ENCODE measurements at regions of chr1 and their contacts with region 1.

Region 1: DNA sequence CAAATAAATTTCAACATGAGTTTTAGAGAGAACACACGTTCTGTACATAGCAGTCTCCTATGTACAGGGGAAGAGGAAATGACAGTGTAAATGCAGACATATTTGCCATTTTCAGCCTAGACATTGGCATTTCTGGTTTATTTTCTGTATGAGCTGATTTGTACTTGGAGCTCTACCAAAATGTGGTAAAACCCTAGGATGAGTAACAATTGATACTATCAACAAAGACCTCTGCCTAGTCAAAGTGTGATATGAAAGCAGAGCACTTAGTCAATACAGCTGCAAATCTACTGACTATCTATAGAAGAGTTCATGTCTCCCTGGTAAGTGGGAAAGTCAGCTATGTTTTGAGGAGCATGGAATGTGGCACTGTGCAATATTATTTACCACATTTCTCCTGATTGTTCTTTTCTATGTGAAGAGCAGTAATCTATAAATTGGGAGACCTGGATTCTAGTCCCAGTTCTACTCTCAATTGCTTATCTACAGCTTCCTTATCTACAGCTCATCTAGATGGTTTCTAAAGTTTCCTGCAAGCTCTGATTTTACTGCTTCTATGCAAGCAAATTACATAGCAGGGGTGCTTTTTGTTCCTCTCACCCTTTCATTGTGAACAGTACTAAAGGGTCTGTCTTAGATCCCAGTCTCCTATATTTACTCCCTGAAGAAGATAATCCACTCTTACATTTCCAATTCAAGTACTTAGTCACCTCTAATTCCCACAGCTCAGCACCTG is 334.2 kb downstream of the NTNG1 start:
- DNase-seq: no peak
- ATAC-seq: peak; percentile 84
- H3K4me3 ChIP-seq: no peak overlapping the region
- H3K27ac ChIP-seq: no peak overlapping the region
- H3K4me1 ChIP-seq: peaks cover 5% of the 10 kb centered on the region; the same call in 1 of the 2 replicates
- H3K27me3 ChIP-seq: no peaks in the 10 kb centered on the region
- CTCF ChIP-seq: no peak
- EP300 ChIP-seq: no peak
- POLR2A ChIP-seq: no peak
- RAD21 ChIP-seq: no peak

Region 2: DNA sequence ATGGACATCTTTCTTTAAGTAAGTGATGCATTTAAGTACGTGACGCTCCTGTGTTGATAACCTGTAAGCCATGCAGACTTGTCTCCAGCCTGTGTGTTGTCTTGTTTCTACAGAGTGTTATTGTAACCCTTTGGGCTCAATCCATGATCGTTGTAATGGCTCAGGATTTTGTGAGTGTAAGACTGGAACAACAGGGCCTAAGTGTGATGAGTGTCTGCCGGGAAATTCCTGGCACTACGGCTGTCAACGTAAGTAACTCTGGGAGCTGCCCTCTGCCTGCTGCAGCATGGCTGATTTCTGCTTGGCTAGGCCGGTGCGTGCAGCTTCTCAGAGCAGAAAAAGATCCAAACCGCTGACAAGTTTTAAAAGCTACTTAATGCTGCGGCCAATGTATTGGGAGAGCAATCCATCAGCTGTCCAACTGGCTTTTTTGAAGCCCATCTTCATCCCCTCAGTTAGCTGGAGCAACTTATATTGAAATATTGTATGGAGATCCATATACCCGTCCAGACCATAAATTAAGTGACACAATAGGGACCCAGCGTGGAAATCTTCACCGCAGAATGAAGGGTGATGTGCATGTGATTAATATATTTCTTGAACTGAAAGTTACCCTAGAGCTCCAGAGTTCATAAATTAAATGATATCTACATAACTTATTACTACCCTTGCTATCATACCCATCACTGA is 38.3 kb before region 1 on chr1:
- CTCF ChIA-PET with region 1: interaction called, 124 read pairs
- POLR2A ChIA-PET with region 1: interaction called, 3 read pairs
- RAD21 ChIA-PET with region 1: interaction called, 30 read pairs
- SMC1A ChIA-PET with region 1: interaction called, 156 read pairs
- in situ Hi-C with region 1: no loop called
- intact Hi-C with region 1: loop called (anchors 2 kb)
- DNase-seq: no peak
- ATAC-seq: no peak
- H3K4me3 ChIP-seq: no peak overlapping the region
- H3K27ac ChIP-seq: no peak overlapping the region
- H3K4me1 ChIP-seq: peaks cover 6% of the 10 kb centered on the region; the same call in 1 of the 2 replicates
- H3K27me3 ChIP-seq: no peaks in the 10 kb centered on the region
- CTCF ChIP-seq: no peak
- EP300 ChIP-seq: no peak
- POLR2A ChIP-seq: no peak
- RAD21 ChIP-seq: no peak

Region 3: DNA sequence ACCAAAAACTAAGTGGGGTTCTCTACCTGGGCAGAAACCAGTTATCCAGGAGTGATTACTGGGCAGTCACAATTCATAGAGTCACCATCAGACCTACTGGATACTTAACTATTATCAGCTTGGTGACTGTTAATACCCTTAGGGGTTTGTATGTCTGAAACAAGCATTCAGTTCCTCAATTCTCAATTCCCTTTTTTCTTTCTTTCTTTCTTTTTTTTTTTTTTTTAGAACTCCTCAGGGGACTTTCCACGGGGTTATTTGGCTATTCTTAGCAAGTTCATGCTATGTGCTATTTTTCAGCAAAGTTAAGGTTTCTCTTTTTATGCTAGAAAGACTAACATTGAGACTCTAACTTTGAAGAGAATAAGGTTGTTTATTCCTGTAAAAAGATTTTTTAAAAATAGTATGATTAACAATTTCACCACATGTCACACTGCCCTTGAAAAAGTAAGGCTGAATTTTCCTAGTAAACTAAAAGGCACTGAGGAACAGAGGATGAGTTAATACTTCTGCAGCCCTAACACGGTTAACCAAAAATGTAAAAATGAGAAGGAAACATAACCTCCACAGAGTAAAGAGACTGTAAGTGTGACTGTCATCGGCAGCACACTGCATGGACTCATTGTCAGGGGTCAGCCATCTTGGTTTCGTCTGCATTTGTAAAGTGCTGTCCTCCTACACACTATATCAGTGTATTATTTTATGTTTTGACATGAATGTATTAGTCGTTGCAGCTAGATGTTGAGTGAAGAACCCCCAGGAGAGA is 24.0 kb before region 1 on chr1:
- CTCF ChIA-PET with region 1: interaction called, 16 read pairs
- POLR2A ChIA-PET with region 1: interaction called, 3 read pairs
- RAD21 ChIA-PET with region 1: interaction called, 3 read pairs
- SMC1A ChIA-PET with region 1: interaction called, 65 read pairs
- in situ Hi-C with region 1: no loop called
- intact Hi-C with region 1: no loop called
- DNase-seq: peak; percentile 72
- ATAC-seq: peak; percentile 93
- H3K4me3 ChIP-seq: peak overlapping the region; percentile 45; the same call in 1 of the 2 replicates
- H3K27ac ChIP-seq: peak overlapping the region; percentile 96
- H3K4me1 ChIP-seq: peaks cover 29% of the 10 kb centered on the region
- H3K27me3 ChIP-seq: no peaks in the 10 kb centered on the region
- CTCF ChIP-seq: no peak
- EP300 ChIP-seq: peak; percentile 80 to 91; a peak in 3 of 4 replicates
- POLR2A ChIP-seq: peak; percentile 59
- RAD21 ChIP-seq: no peak

Region 4: GRCh38 chr1:107460035-107460434 is 15.0 kb before region 1 on chr1:
- CTCF ChIA-PET with region 1: interaction called, 17 read pairs
- POLR2A ChIA-PET with region 1: interaction called, 6 read pairs
- RAD21 ChIA-PET with region 1: interaction called, 5 read pairs
- SMC1A ChIA-PET with region 1: interaction called, 65 read pairs
- in situ Hi-C with region 1: no loop called
- intact Hi-C with region 1: no loop called
- DNase-seq: peak; percentile 40
- ATAC-seq: peak; percentile 88
- H3K4me3 ChIP-seq: no peak overlapping the region
- H3K27ac ChIP-seq: no peak overlapping the region
- H3K4me1 ChIP-seq: peaks cover 10% of the 10 kb centered on the region
- H3K27me3 ChIP-seq: no peaks in the 10 kb centered on the region
- CTCF ChIP-seq: no peak
- EP300 ChIP-seq: no peak
- POLR2A ChIP-seq: no peak
- RAD21 ChIP-seq: no peak

Region 5: DNA sequence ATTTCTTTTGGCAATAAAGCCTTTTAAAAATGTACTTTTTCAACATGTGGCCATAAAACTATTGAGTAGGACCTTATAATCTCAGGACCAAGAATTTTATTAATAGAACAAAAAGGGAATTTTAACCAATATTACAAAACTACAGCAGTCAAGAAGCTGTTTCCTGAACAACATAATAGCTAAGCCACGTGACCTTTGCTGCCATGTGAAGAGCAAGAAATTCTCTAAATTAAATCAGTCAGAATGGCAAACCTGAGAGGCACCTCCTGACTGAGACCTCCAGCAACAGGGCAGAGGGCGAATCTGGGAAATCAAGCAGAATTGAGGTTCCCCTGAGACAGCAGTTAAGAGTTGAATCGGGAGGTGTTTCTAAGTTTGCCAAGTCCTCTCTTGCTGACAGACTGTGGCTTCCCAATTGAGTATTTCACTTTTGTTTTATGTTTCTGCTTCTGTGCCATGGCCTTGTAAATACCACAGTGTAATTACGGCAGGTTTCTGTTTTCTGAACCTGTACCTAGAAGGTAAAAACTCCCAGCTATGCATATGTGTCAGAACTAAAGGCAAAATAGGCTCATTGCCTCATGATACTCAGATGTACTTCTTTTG is 24.2 kb after region 1 on chr1:
- CTCF ChIA-PET with region 1: interaction called, 6 read pairs
- POLR2A ChIA-PET with region 1: interaction called, 3 read pairs
- RAD21 ChIA-PET with region 1: interaction called, 11 read pairs
- SMC1A ChIA-PET with region 1: interaction called, 27 read pairs
- in situ Hi-C with region 1: no loop called
- intact Hi-C with region 1: no loop called
- DNase-seq: peak; percentile 76
- ATAC-seq: peak; percentile 97
- H3K4me3 ChIP-seq: no peak overlapping the region
- H3K27ac ChIP-seq: peak overlapping the region; percentile 57
- H3K4me1 ChIP-seq: peaks cover 13% of the 10 kb centered on the region
- H3K27me3 ChIP-seq: no peaks in the 10 kb centered on the region
- CTCF ChIP-seq: no peak
- EP300 ChIP-seq: peak; percentile 64 to 69; a peak in 2 of 4 replicates
- POLR2A ChIP-seq: no peak
- RAD21 ChIP-seq: no peak

Region 6: GRCh38 chr1:108533351-108534083 is 1058.5 kb after region 1 on chr1:
- CTCF ChIA-PET with region 1: no interaction called
- POLR2A ChIA-PET with region 1: no interaction called
- RAD21 ChIA-PET with region 1: no interaction called
- SMC1A ChIA-PET with region 1: no interaction called
- in situ Hi-C with region 1: loop called (anchors 25 kb)
- intact Hi-C with region 1: no loop called
- DNase-seq: peak; percentile 40
- ATAC-seq: peak; percentile 80
- H3K4me3 ChIP-seq: no peak overlapping the region
- H3K27ac ChIP-seq: no peak overlapping the region
- H3K4me1 ChIP-seq: peaks cover 6% of the 10 kb centered on the region
- H3K27me3 ChIP-seq: no peaks in the 10 kb centered on the region
- CTCF ChIP-seq: 0 out of 6 replicates have a peak, but pooled peaks of 1 of the 3 experiments have one; percentile 8
- EP300 ChIP-seq: 0 out of 4 replicates have a peak, but pooled peaks of 1 of the 2 experiments have one; percentile 58
- POLR2A ChIP-seq: no peak
- RAD21 ChIP-seq: 0 out of 2 replicates have a peak, but pooled peaks have one; percentile 12

Measured in GM12878 (cell line).